ENCODE measurements at regions of chr13 and their contacts with region 1.

Region 1: GRCh38 chr13:52450012-52450792 is at the start of gene VPS36:
- DNase-seq: peak; percentile 96
- ATAC-seq: peak; percentile 74
- H3K4me3 Mint-ChIP-seq: peak within 1 kb of the TSS; percentile 96
- H3K27ac Mint-ChIP-seq: peak within 1 kb of the TSS; percentile 87
- H3K4me1 Mint-ChIP-seq: peaks cover 32% of the 10 kb centered on the region
- H3K27me3 Mint-ChIP-seq: no peaks in the 10 kb centered on the region
- CTCF ChIP-seq: peak; percentile 100
- total RNA-seq, gene VPS36: 26.3 to 29.6 TPM

Region 2: DNA sequence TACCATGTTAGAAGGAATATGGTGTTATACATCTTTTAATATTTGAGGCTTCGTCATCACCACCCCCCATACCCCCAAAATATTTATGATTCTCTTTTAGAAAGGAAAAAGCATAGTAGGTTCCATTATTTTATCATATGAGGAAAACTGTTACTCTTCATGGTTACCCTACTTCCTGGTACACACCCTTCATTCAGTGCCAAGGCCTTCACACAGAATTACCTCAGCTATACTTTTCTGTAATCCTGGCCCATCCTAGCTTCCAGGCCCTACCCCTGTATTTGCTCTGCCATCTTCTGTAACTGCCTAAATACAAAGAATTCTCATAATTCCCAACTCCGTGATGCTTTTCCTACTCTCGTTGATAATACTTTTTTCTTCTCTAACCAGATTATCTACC is 430.0 kb before region 1 on chr13:
- CTCF ChIA-PET with region 1: no interaction called
- POLR2A ChIA-PET with region 1: no interaction called
- intact Hi-C with region 1: no loop called
- DNase-seq: no peak
- ATAC-seq: no peak
- H3K4me3 Mint-ChIP-seq: no peak overlapping the region
- H3K27ac Mint-ChIP-seq: no peak overlapping the region
- H3K4me1 Mint-ChIP-seq: peaks cover 8% of the 10 kb centered on the region
- H3K27me3 Mint-ChIP-seq: no peaks in the 10 kb centered on the region
- CTCF ChIP-seq: no peak

Region 3: GRCh38 chr13:52194184-52194868 is 255.9 kb before region 1 on chr13:
- CTCF ChIA-PET with region 1: interaction called, 11 read pairs
- POLR2A ChIA-PET with region 1: interaction called, 5 read pairs
- intact Hi-C with region 1: no loop called
- DNase-seq: peak; percentile 88
- ATAC-seq: peak; percentile 89
- H3K4me3 Mint-ChIP-seq: peak overlapping the region; percentile 90
- H3K27ac Mint-ChIP-seq: peak overlapping the region; percentile 98
- H3K4me1 Mint-ChIP-seq: peaks cover 29% of the 10 kb centered on the region
- H3K27me3 Mint-ChIP-seq: no peaks in the 10 kb centered on the region
- CTCF ChIP-seq: no peak

Region 4: DNA sequence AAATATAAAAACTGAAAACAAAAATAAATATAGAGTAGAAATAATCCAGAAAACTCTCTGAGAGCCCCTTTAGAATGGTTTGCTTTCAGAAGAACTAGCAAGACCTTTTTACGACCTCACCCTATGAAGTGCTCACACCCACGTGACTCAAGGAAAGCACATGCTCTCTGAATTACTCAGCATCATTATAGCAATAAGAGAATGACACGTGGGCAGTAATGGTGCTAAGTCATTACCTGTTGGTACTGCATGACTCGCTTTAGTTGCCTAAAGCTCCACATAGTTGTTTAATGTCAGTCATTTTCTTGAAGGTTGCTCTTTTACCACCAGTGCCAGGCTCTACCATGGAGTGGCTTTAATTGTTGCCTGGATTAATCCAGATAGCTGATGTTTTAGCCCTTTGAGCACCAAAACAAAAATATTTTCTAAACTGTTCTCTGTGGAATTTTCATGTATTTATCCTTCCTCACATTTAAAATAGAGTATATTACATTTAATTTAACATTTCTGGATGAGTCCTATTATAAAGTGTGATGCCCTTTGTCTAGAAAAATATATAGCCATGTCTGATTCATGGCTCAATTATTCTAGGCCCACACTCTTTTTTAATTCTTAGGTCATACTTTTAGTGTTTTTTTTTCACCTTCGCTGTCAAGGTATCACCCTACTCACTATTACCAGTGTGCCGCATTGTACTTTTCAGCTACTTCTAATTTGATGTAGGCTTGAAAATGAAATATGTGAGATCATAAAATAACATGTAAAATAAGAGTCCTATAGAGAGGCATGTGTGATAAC is 101.0 kb before region 1 on chr13:
- CTCF ChIA-PET with region 1: interaction called, 32 read pairs
- POLR2A ChIA-PET with region 1: interaction called, 10 read pairs
- intact Hi-C with region 1: loop called (anchors 5 kb)
- DNase-seq: peak; percentile 48
- ATAC-seq: peak; percentile 93
- H3K4me3 Mint-ChIP-seq: no peak overlapping the region
- H3K27ac Mint-ChIP-seq: no peak overlapping the region
- H3K4me1 Mint-ChIP-seq: peaks cover 3% of the 10 kb centered on the region
- H3K27me3 Mint-ChIP-seq: peaks cover 7% of the 10 kb centered on the region
- CTCF ChIP-seq: no peak

Region 5: GRCh38 chr13:52411629-52412028 is 38.6 kb before region 1 on chr13:
- CTCF ChIA-PET with region 1: interaction called, 11 read pairs
- POLR2A ChIA-PET with region 1: interaction called, 3 read pairs
- intact Hi-C with region 1: no loop called
- DNase-seq: no peak
- ATAC-seq: no peak
- H3K4me3 Mint-ChIP-seq: no peak overlapping the region
- H3K27ac Mint-ChIP-seq: no peak overlapping the region
- H3K4me1 Mint-ChIP-seq: no peaks in the 10 kb centered on the region
- H3K27me3 Mint-ChIP-seq: no peaks in the 10 kb centered on the region
- CTCF ChIP-seq: no peak

Region 6: GRCh38 chr13:52421216-52421615 is 29.0 kb before region 1 on chr13:
- CTCF ChIA-PET with region 1: interaction called, 19 read pairs
- POLR2A ChIA-PET with region 1: interaction called, 3 read pairs
- intact Hi-C with region 1: no loop called
- DNase-seq: no peak
- ATAC-seq: no peak
- H3K4me3 Mint-ChIP-seq: no peak overlapping the region
- H3K27ac Mint-ChIP-seq: no peak overlapping the region
- H3K4me1 Mint-ChIP-seq: no peaks in the 10 kb centered on the region
- H3K27me3 Mint-ChIP-seq: no peaks in the 10 kb centered on the region
- CTCF ChIP-seq: no peak

Region 7: DNA sequence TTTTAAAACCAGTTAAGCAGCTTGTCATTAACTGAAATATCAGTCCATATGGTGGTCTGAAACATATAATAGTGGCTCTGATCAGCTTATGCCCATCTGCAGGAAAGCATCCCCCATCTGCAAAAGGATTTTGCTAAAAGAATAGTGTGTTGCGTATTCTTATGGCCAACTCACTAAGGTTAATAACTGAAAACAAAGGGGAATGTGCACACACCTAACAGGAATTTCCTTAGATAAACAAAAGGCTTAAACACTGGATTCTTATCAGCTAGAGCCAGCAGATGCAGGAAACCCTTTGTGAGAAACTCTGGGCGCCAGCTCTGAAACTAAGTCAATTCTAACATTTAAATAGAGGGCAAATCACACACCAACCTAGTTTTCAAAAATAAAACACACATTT is 21.9 kb before region 1 on chr13:
- CTCF ChIA-PET with region 1: interaction called, 19 read pairs
- POLR2A ChIA-PET with region 1: interaction called, 5 read pairs
- intact Hi-C with region 1: no loop called
- DNase-seq: no peak
- ATAC-seq: no peak
- H3K4me3 Mint-ChIP-seq: no peak overlapping the region
- H3K27ac Mint-ChIP-seq: no peak overlapping the region
- H3K4me1 Mint-ChIP-seq: no peaks in the 10 kb centered on the region
- H3K27me3 Mint-ChIP-seq: no peaks in the 10 kb centered on the region
- CTCF ChIP-seq: no peak

Region 8: GRCh38 chr13:52652196-52652979 is 202.2 kb after region 1 on chr13 and contains the start of gene SUGT1:
- CTCF ChIA-PET with region 1: interaction called, 14 read pairs
- POLR2A ChIA-PET with region 1: interaction called, 8 read pairs
- intact Hi-C with region 1: loop called (anchors 5 kb)
- DNase-seq: peak; percentile 96
- ATAC-seq: peak; percentile 97
- H3K4me3 Mint-ChIP-seq: no peak within 1 kb of the TSS
- H3K27ac Mint-ChIP-seq: no peak within 1 kb of the TSS
- H3K4me1 Mint-ChIP-seq: peaks cover 20% of the 10 kb centered on the region
- H3K27me3 Mint-ChIP-seq: no peaks in the 10 kb centered on the region
- CTCF ChIP-seq: peak; percentile 72
- total RNA-seq, gene SUGT1: 52.0 to 52.5 TPM

Measured in activated CD8-positive, alpha-beta T cell treated with anti-CD3 and anti-CD28 coated beads for 36 hours (primary cell).